H1 (cell line): ENCODE measurements at regions of chr2 and their contacts with region 1.

Region 1: GRCh38 chr2:85243101-85244072 is 84.4 kb downstream of the TGOLN2 start:
- DNase-seq: peak in 1 of 2 experiments; percentile 83
- H3K4me3 ChIP-seq: no peak overlapping the region
- H3K27ac ChIP-seq: peak overlapping the region; percentile 1; the same call in 1 of the 2 replicates
- H3K4me1 ChIP-seq: peaks cover 24 to 50% (median 37%) of the 10 kb centered on the region in 4 experiments
- H3K27me3 ChIP-seq: no peaks in the 10 kb centered on the region
- CTCF ChIP-seq: peak; percentile 70 to 78 (median 74)
- EP300 ChIP-seq: no peak
- POLR2A ChIP-seq: no peak
- RAD21 ChIP-seq: peak; percentile 57 to 71

Region 2: GRCh38 chr2:85162746-85163301 is 80.6 kb before region 1 on chr2:
- CTCF ChIA-PET with region 1: interaction called, 10 read pairs
- POLR2A ChIA-PET with region 1: interaction called, 3 read pairs
- DNase-seq: no peak
- H3K4me3 ChIP-seq: no peak overlapping the region
- H3K27ac ChIP-seq: no peak overlapping the region
- H3K4me1 ChIP-seq: peaks cover 15 to 46% (median 29%) of the 10 kb centered on the region in 4 experiments
- H3K27me3 ChIP-seq: no peaks in the 10 kb centered on the region; a peak in 1 of 7 replicates
- CTCF ChIP-seq: no peak
- EP300 ChIP-seq: no peak
- POLR2A ChIP-seq: no peak
- RAD21 ChIP-seq: no peak

Region 3: GRCh38 chr2:85215448-85216401 is 27.7 kb before region 1 on chr2:
- CTCF ChIA-PET with region 1: interaction called, 19 read pairs
- POLR2A ChIA-PET with region 1: interaction called, 9 read pairs
- DNase-seq: no peak
- H3K4me3 ChIP-seq: peak overlapping the region in 1 of 4 experiments; percentile 39; a peak in 2 of 8 replicates
- H3K27ac ChIP-seq: peak overlapping the region; percentile 62
- H3K4me1 ChIP-seq: peaks cover 22 to 41% (median 27%) of the 10 kb centered on the region in 4 experiments
- H3K27me3 ChIP-seq: no peaks in the 10 kb centered on the region
- CTCF ChIP-seq: no peak
- EP300 ChIP-seq: 0 out of 3 replicates have a peak, but pooled peaks of 1 of the 2 experiments have one; percentile 42
- POLR2A ChIP-seq: no peak
- RAD21 ChIP-seq: no peak

Region 4: DNA sequence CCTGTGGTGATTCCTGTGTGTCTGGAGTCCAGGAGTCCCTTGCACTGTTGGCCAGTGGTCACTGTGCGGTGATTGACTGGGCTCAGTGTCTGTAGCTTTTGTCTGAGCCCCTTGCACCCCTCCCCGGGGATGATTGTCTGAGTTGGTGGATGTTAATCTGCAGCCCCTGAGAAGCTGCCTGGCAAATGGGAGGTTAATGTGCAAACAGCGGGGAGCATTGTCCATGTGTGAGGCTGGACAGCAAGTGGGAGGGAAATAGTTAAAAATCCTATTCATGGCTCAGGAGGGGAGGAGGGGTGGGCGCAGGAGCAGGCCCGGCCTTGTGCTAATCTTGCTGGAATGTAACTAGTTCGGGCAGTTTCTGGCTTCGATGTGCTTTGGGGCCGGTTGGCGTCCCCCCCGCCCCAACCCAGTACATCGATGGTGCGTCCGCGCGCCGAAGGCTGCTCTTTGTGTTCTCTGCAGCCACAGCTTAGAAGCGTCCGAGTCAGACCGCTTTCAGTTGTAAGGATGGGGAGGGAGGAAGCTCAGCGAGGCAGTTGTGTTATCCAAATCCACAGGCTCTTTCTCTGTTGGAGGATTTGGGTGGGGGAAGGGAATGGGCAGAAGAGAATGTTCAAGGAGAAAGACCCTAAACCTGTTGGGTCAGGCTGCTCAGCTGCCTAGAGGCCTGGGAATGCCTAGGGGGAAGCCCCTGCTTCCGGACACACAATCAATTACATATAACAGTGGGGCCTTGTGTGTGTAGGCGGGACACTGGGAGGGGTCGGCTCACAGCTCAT is 12.6 kb after region 1 on chr2:
- CTCF ChIA-PET with region 1: interaction called, 55 read pairs
- POLR2A ChIA-PET with region 1: interaction called, 60 read pairs
- DNase-seq: peak in 1 of 2 experiments; percentile 81
- H3K4me3 ChIP-seq: peak overlapping the region; percentile 1 to 48 (median 30); a peak in 7 of 8 replicates
- H3K27ac ChIP-seq: peak overlapping the region; percentile 97
- H3K4me1 ChIP-seq: peaks cover 43 to 65% (median 57%) of the 10 kb centered on the region in 4 experiments
- H3K27me3 ChIP-seq: no peaks in the 10 kb centered on the region
- CTCF ChIP-seq: no peak
- EP300 ChIP-seq: peak in 1 of 2 experiments; percentile 72; a peak in 1 of 3 replicates
- POLR2A ChIP-seq: peak; percentile 37 to 69
- RAD21 ChIP-seq: peak in 1 of 2 experiments; percentile 27; a peak in 2 of 4 replicates

Region 5: DNA sequence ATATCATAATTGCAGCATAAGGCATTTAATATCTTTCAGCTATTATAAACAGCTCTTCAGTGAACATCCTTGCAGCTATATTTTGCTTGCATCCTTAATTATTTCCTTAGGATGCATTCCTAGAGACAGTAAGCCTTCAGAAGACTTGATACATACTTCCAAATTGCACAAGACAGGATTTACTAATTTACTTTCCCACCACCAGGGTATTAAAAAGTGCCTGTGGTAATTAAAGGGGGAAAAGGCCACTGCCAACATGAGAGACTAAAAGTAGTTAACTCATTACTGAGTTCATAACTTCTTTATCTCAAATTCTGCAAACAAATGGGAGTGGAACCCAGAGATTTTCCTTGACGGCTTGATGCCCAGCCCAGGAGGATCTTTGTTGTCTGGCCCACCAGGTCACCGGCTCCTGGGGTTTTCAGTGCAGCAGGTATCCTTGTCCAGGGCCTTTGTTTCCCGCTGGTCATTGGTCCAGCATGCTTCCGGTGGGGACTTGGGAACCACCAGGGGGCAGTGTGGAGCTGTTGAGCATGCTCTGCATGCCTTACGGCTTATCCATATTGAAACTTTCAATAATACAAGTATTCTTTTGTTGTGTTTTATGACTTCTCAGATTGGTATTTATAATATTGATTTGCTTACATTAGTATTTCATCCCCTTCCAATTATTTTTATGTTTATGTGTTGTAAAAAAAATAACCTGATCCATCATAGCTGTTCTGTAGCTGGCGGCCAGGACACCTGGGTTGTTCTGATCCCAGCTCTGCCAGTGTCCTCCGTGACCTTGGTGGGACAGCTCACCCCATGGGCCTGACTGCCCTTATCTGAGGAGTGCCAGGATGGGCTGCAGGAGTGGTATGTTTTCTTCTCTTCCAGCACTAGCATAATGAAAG is 23.0 kb after region 1 on chr2:
- CTCF ChIA-PET with region 1: interaction called, 283 read pairs
- POLR2A ChIA-PET with region 1: interaction called, 4 read pairs
- DNase-seq: peak in 1 of 2 experiments; percentile 91
- H3K4me3 ChIP-seq: no peak overlapping the region
- H3K27ac ChIP-seq: no peak overlapping the region
- H3K4me1 ChIP-seq: peaks cover 13 to 23% (median 21%) of the 10 kb centered on the region in 4 experiments; a peak in 6 of 7 replicates
- H3K27me3 ChIP-seq: no peaks in the 10 kb centered on the region
- CTCF ChIP-seq: peak; percentile 83 to 85 (median 85)
- EP300 ChIP-seq: no peak
- POLR2A ChIP-seq: no peak
- RAD21 ChIP-seq: peak; percentile 62 to 76

Region 6: GRCh38 chr2:85282914-85283313 is 39.5 kb after region 1 on chr2:
- CTCF ChIA-PET with region 1: interaction called, 283 read pairs
- POLR2A ChIA-PET with region 1: interaction called, 3 read pairs
- DNase-seq: no peak
- H3K4me3 ChIP-seq: no peak overlapping the region
- H3K27ac ChIP-seq: no peak overlapping the region
- H3K4me1 ChIP-seq: peaks cover 1 to 4% (median 2%) of the 10 kb centered on the region in 4 experiments; a peak in 6 of 7 replicates
- H3K27me3 ChIP-seq: no peaks in the 10 kb centered on the region
- CTCF ChIP-seq: no peak
- EP300 ChIP-seq: no peak
- POLR2A ChIP-seq: no peak
- RAD21 ChIP-seq: no peak